ENCODE measurements at regions of chr2 and their contacts with region 1.

Region 1: GRCh38 chr2:64653349-64654062 is at the start of gene SERTAD2:
- DNase-seq: peak; percentile 82
- ATAC-seq: peak; percentile 85
- H3K4me3 Mint-ChIP-seq: peak within 1 kb of the TSS; percentile 78
- H3K27ac Mint-ChIP-seq: peak within 1 kb of the TSS; percentile 73
- H3K4me1 Mint-ChIP-seq: peaks cover 48% of the 10 kb centered on the region
- H3K27me3 Mint-ChIP-seq: peaks cover 35% of the 10 kb centered on the region
- CTCF ChIP-seq: no peak
- total RNA-seq, gene SERTAD2: 7.9 to 8.0 TPM (median 7.9 TPM) in 3 replicates

Region 2: GRCh38 chr2:64514008-64514407 is 139.5 kb before region 1 on chr2:
- CTCF ChIA-PET with region 1: no interaction called
- POLR2A ChIA-PET with region 1: no interaction called
- DNase-seq: no peak
- ATAC-seq: no peak
- H3K4me3 Mint-ChIP-seq: no peak overlapping the region
- H3K27ac Mint-ChIP-seq: no peak overlapping the region
- H3K4me1 Mint-ChIP-seq: no peaks in the 10 kb centered on the region; the same call in 1 of the 2 replicates
- H3K27me3 Mint-ChIP-seq: no peaks in the 10 kb centered on the region; the same call in 1 of the 2 replicates
- CTCF ChIP-seq: no peak

Region 3: DNA sequence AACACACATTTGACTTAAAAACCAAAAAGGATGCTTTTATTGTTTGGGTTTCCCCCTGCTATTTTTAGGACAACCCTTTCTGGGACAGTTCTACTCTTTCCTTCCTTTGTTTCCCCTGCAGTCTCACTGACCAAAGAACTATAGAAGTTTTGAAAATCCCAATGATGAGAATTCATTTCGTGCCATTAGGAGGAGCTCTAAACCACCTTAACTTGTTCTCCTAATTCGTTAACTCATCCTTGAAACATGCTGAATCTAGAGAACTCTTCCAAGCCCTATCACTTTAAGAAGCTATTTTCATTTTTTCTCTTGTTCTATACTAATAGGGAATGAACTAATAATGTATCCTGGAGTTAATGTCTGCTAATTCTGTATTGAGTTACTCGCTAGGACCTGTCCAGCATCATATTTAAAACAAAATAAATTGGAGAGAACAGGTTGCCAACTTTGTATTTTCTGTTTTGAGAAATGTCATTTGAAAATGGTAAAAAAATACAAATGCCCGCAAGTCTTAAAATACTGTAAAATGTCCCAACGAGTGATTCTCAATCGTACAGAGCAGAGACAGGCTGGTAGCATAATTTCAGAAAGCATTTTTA is 66.5 kb before region 1 on chr2:
- CTCF ChIA-PET with region 1: no interaction called
- POLR2A ChIA-PET with region 1: no interaction called
- DNase-seq: no peak
- ATAC-seq: no peak
- H3K4me3 Mint-ChIP-seq: no peak overlapping the region
- H3K27ac Mint-ChIP-seq: no peak overlapping the region
- H3K4me1 Mint-ChIP-seq: no peaks in the 10 kb centered on the region
- H3K27me3 Mint-ChIP-seq: no peaks in the 10 kb centered on the region
- CTCF ChIP-seq: 0 out of 2 replicates have a peak, but pooled peaks have one; percentile 18

Region 4: DNA sequence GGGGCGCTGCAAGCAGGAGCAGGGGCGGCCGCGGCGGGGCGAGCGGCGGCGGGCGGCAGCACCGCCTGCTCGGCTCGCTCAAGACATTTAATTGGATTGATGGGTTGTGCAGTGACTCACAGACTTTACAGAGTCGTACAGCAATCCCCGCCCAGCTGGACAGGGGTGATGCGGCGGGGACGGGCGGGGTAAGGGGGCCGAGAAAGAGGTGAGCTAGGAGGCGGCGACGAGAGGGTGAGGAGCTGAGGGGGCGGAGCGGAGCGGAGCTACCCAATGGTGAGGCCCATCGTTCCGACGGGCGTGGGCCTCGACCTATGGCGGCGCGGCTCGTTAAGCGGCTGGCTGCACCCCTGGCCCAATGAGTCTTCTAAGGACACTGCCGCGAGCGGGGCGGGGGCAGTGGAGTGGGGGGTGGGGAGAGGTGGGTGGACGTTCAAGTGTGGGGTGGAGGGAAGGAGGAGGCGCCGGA is 97.3 kb after region 1 on chr2:
- CTCF ChIA-PET with region 1: interaction called, 22 read pairs
- POLR2A ChIA-PET with region 1: interaction called, 26 read pairs
- DNase-seq: peak; percentile 97
- ATAC-seq: peak; percentile 94
- H3K4me3 Mint-ChIP-seq: peak overlapping the region; percentile 96
- H3K27ac Mint-ChIP-seq: peak overlapping the region; percentile 97
- H3K4me1 Mint-ChIP-seq: peaks cover 15% of the 10 kb centered on the region
- H3K27me3 Mint-ChIP-seq: peaks cover 23% of the 10 kb centered on the region
- CTCF ChIP-seq: no peak

Region 5: GRCh38 chr2:64859312-64860212 is 206.1 kb after region 1 on chr2:
- CTCF ChIA-PET with region 1: interaction called, 11 read pairs
- POLR2A ChIA-PET with region 1: interaction called, 12 read pairs
- DNase-seq: peak; percentile 72
- ATAC-seq: peak; percentile 71
- H3K4me3 Mint-ChIP-seq: peak overlapping the region; percentile 72
- H3K27ac Mint-ChIP-seq: no peak overlapping the region
- H3K4me1 Mint-ChIP-seq: peaks cover 20% of the 10 kb centered on the region
- H3K27me3 Mint-ChIP-seq: peaks cover 27% of the 10 kb centered on the region
- CTCF ChIP-seq: no peak

Region 6: GRCh38 chr2:64865073-64865830 is 211.7 kb after region 1 on chr2:
- CTCF ChIA-PET with region 1: interaction called, 11 read pairs
- POLR2A ChIA-PET with region 1: interaction called, 12 read pairs
- DNase-seq: peak; percentile 57
- ATAC-seq: peak; percentile 79
- H3K4me3 Mint-ChIP-seq: no peak overlapping the region
- H3K27ac Mint-ChIP-seq: no peak overlapping the region
- H3K4me1 Mint-ChIP-seq: no peaks in the 10 kb centered on the region
- H3K27me3 Mint-ChIP-seq: peaks cover 21% of the 10 kb centered on the region
- CTCF ChIP-seq: peak; percentile 90